Left colon (tissue), 2 donors: ENCODE measurements at regions of chr4 and their contacts with region 1.

Region 1: DNA sequence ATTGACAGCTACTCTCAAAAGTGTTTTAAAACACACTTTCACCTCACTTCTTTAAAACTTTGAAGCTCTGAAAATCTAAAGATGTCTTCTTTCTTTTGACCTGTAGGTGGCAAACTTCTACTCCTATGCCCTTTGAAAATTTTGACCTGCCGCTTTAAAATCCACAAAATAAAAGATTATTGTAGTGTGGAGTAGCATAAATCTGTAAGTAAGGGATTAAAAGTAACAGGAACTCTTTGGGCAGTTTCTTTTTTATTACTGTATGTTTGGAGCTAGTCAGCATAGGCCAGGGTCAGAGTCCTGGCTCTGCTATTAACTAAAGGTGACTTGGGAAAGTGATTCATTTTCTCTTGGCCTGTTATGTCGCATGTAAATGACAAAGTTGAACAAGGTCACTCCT is 25.5 kb downstream of the BBS12 start:
- DNase-seq: peak in 1 of 2 donors; percentile 44
- ATAC-seq: peak; percentile 99

Region 2: GRCh38 chr4:122508083-122508482 is 249.9 kb before region 1 on chr4:
- intact Hi-C with region 1: no loop called
- DNase-seq: no peak
- ATAC-seq: no peak

Region 3: GRCh38 chr4:122914292-122914904 is 156.4 kb after region 1 on chr4:
- intact Hi-C with region 1: loop called in 1 of 2 experiments (anchors 5 kb)
- DNase-seq: no peak
- ATAC-seq: no peak

Region 4: DNA sequence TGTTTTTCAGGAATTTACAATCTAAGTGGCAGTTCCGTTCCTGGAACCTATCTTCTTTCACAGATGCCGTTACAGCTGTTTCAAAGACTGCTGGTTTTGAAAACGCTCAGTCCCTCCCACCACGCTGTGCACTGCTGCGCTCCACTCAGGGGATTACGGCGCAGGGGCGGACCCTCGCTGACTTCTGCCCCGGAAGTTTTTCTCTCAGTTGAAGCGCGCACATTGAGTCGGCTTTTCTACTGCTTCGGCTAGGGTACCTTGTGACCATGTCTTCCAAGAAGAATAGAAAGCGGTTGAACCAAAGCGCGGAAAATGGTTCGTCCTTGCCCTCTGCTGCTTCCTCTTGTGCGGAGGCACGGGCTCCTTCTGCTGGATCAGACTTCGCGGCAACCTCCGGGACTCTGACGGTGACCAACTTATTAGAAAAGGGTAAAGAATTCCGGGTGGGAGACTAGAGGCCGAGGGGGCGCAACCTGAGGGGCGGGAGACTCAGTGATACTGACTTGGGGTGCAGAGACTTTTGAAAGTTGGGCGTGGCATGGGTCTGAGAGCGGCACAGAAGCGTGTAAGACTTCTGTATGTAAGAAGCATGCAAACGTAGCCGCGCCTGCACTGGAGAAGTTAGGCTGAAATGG is 165.0 kb after region 1 on chr4:
- intact Hi-C with region 1: loop called in 1 of 2 experiments (anchors 10 kb)
- DNase-seq: peak; percentile 88
- ATAC-seq: peak; percentile 98

Region 5: GRCh38 chr4:122930862-122931261 is 172.8 kb after region 1 on chr4:
- intact Hi-C with region 1: loop called (anchors 5 to 10 kb)
- DNase-seq: no peak
- ATAC-seq: no peak